GM12878 (cell line): ENCODE measurements at regions of chr17 and their contacts with region 1.

Region 1: DNA sequence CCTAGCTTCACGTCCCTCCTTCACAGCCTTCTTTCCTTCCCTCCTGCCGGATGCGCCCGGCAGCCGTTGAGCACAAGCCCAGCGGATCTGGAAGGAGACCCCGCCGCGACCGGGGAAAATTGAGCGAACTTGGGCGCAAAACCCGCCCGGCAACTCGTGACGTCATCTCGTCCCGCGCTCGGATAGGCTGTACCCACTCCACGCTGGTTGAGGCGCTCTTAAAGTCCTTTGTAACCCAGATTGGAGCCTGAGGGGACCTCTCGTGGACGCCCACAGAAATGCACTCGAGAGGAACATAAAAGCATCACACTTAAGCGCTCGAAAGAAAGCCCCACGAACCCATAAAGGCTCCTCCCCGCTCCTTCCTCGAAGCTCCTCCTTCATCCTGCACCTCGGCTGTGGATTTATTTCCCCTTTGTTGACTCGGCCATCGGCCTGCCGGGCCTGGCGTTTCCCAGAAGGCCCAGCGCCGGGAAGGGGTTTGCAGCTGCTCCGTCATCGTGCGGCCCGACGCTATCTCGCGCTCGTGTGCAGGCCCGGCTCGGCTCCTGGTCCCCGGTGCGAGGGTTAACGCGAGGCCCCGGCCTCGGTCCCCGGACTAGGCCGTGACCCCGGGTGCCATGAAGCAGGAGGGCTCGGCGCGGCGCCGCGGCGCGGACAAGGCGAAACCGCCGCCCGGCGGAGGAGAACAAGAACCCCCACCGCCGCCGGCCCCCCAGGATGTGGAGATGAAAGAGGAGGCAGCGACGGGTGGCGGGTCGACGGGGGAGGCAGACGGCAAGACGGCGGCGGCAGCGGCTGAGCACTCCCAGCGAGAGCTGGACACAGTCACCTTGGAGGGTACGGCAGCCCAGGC is at the start of gene PSMD3:
- DNase-seq: peak; percentile 100
- ATAC-seq: peak; percentile 94
- H3K4me3 ChIP-seq: peak within 1 kb of the TSS; percentile 90
- H3K27ac ChIP-seq: peak within 1 kb of the TSS; percentile 90
- H3K4me1 ChIP-seq: peaks cover 6% of the 10 kb centered on the region
- H3K27me3 ChIP-seq: no peaks in the 10 kb centered on the region; a peak in 1 of 4 replicates
- CTCF ChIP-seq: peak; percentile 80 to 97 (median 92)
- EP300 ChIP-seq: peak; percentile 21 to 44; a peak in 1 of 4 replicates
- POLR2A ChIP-seq: peak; percentile 93
- RAD21 ChIP-seq: peak; percentile 92
- polyA plus RNA-seq, gene PSMD3: 2.2 to 2.6 TPM

Region 2: GRCh38 chr17:39952680-39953470 is 27.7 kb before region 1 on chr17:
- CTCF ChIA-PET with region 1: interaction called, 120 read pairs
- POLR2A ChIA-PET with region 1: interaction called, 10 read pairs
- RAD21 ChIA-PET with region 1: interaction called, 27 read pairs
- SMC1A ChIA-PET with region 1: interaction called, 37 read pairs
- in situ Hi-C with region 1: no loop called
- intact Hi-C with region 1: no loop called
- DNase-seq: peak; percentile 79
- ATAC-seq: peak; percentile 97
- H3K4me3 ChIP-seq: peak overlapping the region; percentile 76
- H3K27ac ChIP-seq: peak overlapping the region; percentile 40; the same call in 1 of the 2 replicates
- H3K4me1 ChIP-seq: peaks cover 3% of the 10 kb centered on the region; the same call in 1 of the 2 replicates
- H3K27me3 ChIP-seq: no peaks in the 10 kb centered on the region
- CTCF ChIP-seq: no peak
- EP300 ChIP-seq: no peak
- POLR2A ChIP-seq: peak; percentile 81; the same call in 1 of the 2 replicates
- RAD21 ChIP-seq: no peak

Region 3: GRCh38 chr17:39963829-39964228 is 16.8 kb before region 1 on chr17:
- CTCF ChIA-PET with region 1: interaction called, 120 read pairs
- POLR2A ChIA-PET with region 1: interaction called, 10 read pairs
- RAD21 ChIA-PET with region 1: interaction called, 27 read pairs
- SMC1A ChIA-PET with region 1: interaction called, 37 read pairs
- in situ Hi-C with region 1: no loop called
- intact Hi-C with region 1: loop called (anchors 1 kb)
- DNase-seq: no peak
- ATAC-seq: no peak
- H3K4me3 ChIP-seq: no peak overlapping the region
- H3K27ac ChIP-seq: no peak overlapping the region
- H3K4me1 ChIP-seq: no peaks in the 10 kb centered on the region; the same call in 1 of the 2 replicates
- H3K27me3 ChIP-seq: no peaks in the 10 kb centered on the region
- CTCF ChIP-seq: no peak
- EP300 ChIP-seq: no peak
- POLR2A ChIP-seq: no peak
- RAD21 ChIP-seq: no peak